HepG2 (cell line): ENCODE measurements at regions of chr16 and their contacts with region 1.

Region 1: GRCh38 chr16:30984669-30985400 is at the start of gene HSD3B7:
- DNase-seq: peak; percentile 80
- ATAC-seq: peak; percentile 78
- H3K4me3 ChIP-seq: peak within 1 kb of the TSS; percentile 41 to 72 (median 54)
- H3K27ac ChIP-seq: peak within 1 kb of the TSS; percentile 49
- H3K4me1 ChIP-seq: peaks cover 16% of the 10 kb centered on the region
- H3K27me3 ChIP-seq: no peaks in the 10 kb centered on the region
- CTCF ChIP-seq: peak; percentile 95
- EP300 ChIP-seq: 0 out of 4 replicates have a peak, but pooled peaks of 1 of the 2 experiments have one; percentile 21
- POLR2A ChIP-seq: peak; percentile 47 to 58; a peak in 3 of 4 replicates
- RAD21 ChIP-seq: peak; percentile 90
- total RNA-seq, gene HSD3B7: 58.8 and 69.7 TPM in 2 replicates

Region 2: GRCh38 chr16:31002250-31002700 is 17.4 kb after region 1 on chr16:
- CTCF ChIA-PET with region 1: interaction called, 3 read pairs
- POLR2A ChIA-PET with region 1: interaction called, 81 read pairs
- in situ Hi-C with region 1: no loop called
- intact Hi-C with region 1: no loop called
- DNase-seq: no peak
- ATAC-seq: peak; percentile 1
- H3K4me3 ChIP-seq: peak overlapping the region; percentile 8 to 73 (median 41)
- H3K27ac ChIP-seq: peak overlapping the region; percentile 50
- H3K4me1 ChIP-seq: peaks cover 95% of the 10 kb centered on the region
- H3K27me3 ChIP-seq: no peaks in the 10 kb centered on the region; a peak in 2 of 5 replicates
- CTCF ChIP-seq: peak; percentile 0; the same call in 1 of the 2 replicates
- EP300 ChIP-seq: no peak
- POLR2A ChIP-seq: no peak
- RAD21 ChIP-seq: no peak

Region 3: GRCh38 chr16:31032736-31033708 is 48.2 kb after region 1 on chr16 and contains the start of gene STX4:
- CTCF ChIA-PET with region 1: interaction called, 4 read pairs
- POLR2A ChIA-PET with region 1: interaction called, 10 read pairs
- in situ Hi-C with region 1: no loop called
- intact Hi-C with region 1: no loop called
- DNase-seq: peak; percentile 94
- ATAC-seq: peak; percentile 88
- H3K4me3 ChIP-seq: peak within 1 kb of the TSS; percentile 86 to 99 (median 94)
- H3K27ac ChIP-seq: peak within 1 kb of the TSS; percentile 82
- H3K4me1 ChIP-seq: peaks cover 39% of the 10 kb centered on the region
- H3K27me3 ChIP-seq: no peaks in the 10 kb centered on the region; a peak in 1 of 5 replicates
- CTCF ChIP-seq: peak; percentile 16; the same call in 1 of the 2 replicates
- EP300 ChIP-seq: no peak
- POLR2A ChIP-seq: peak; percentile 60 to 75; a peak in 2 of 4 replicates
- RAD21 ChIP-seq: no peak
- total RNA-seq, gene STX4: 29.2 and 31.3 TPM in 2 replicates

Region 4: DNA sequence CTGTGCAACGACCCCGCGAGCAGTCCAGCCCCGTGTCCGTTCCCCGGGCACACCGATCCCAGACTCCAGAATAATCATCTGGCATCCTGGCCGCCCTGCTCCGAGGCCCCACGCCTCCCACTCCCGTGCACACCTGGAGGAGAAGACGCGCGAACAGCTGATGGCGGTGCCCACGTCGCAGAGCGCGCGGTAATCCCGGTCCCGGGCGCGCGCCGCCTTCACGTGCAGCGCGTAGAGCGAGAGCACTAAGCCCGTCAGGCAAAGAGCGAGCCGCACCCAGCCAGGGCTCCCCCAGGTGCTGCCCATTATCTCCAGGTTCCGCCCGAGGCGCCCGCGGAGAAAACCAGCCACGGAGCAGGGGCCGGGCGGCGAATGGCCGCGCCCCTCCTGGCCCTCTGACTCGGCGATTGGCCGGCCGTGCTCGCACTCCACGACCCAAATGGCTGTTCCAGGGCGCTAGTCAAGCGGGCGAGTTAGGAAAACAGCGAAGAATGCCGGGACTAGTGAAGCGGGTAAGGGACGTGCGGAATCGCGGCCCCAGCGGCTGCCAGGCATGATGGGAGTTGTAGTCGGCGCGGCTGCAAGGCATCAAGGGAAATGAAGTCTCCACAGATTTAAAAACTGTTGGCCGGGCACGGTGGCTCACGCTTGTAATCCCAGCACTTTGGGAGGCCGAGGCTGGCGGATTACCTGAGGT is 109.7 kb after region 1 on chr16 and contains the start of gene VKORC1:
- CTCF ChIA-PET with region 1: interaction called, 25 read pairs
- POLR2A ChIA-PET with region 1: interaction called, 19 read pairs
- in situ Hi-C with region 1: no loop called
- intact Hi-C with region 1: loop called (anchors 1 kb)
- DNase-seq: peak; percentile 98
- ATAC-seq: peak; percentile 95
- H3K4me3 ChIP-seq: peak within 1 kb of the TSS; percentile 80 to 100 (median 82)
- H3K27ac ChIP-seq: peak within 1 kb of the TSS; percentile 84
- H3K4me1 ChIP-seq: peaks cover 27% of the 10 kb centered on the region
- H3K27me3 ChIP-seq: no peaks in the 10 kb centered on the region; a peak in 1 of 5 replicates
- CTCF ChIP-seq: peak; percentile 44
- EP300 ChIP-seq: peak in 1 of 2 experiments; percentile 44; a peak in 1 of 4 replicates
- POLR2A ChIP-seq: peak; percentile 84 to 90
- RAD21 ChIP-seq: peak; percentile 32; the same call in 1 of the 2 replicates
- total RNA-seq, gene VKORC1: 92.1 and 141 TPM in 2 replicates

Region 5: DNA sequence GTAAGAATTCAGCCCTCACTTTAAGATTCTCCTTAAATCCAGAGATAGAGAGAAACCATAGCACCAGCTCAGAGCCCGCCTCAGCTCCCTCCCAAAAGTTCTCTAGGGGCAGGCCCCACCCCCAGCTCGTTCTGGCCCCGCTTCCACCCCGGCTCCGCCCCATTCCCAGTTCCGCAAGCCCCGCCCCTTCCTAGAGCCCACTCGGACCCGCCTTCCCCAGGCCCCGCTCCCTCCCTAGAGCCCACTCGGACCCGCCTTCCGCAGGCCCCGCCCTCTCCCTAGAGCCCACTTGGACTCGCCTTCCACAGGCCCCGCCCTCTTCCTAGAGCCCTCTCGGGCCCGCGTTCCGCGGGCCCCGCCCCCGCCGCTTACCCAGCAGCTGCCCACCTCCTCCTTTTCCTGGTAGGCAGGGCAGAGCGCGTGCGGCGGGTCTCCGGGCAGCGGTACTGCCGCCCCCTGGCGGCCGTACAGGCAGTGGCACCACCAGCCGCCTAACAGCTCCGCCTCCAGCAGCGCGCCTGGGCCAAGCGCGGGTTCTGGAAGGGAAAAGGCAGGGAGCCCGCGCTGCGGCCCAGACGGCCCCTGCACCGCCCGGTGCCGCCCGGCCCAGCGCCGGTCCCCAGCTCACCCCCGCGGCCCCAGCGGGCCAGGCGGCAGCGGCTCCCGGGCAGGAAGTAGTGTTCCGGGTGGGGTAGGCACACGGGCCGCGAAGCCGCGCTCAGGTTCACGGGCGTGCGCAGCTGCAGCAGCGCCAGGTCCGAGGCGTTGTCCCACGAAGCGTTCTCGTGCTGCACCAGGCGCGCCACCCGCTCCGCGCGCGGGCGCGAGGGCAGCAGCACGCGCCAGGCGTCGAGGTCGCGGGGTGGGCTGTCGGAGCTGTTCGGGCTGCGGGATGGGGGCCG is 157.5 kb after region 1 on chr16:
- CTCF ChIA-PET with region 1: no interaction called
- POLR2A ChIA-PET with region 1: interaction called, 31 read pairs
- in situ Hi-C with region 1: no loop called
- intact Hi-C with region 1: loop called (anchors 1 kb)
- DNase-seq: peak; percentile 98
- ATAC-seq: peak; percentile 74
- H3K4me3 ChIP-seq: peak overlapping the region; percentile 39 to 77 (median 64)
- H3K27ac ChIP-seq: peak overlapping the region; percentile 80
- H3K4me1 ChIP-seq: peaks cover 65% of the 10 kb centered on the region
- H3K27me3 ChIP-seq: peaks cover 0 to 14% of the 10 kb centered on the region in 2 experiments; a peak in 3 of 5 replicates
- CTCF ChIP-seq: peak; percentile 98
- EP300 ChIP-seq: peak; percentile 26 to 27; a peak in 1 of 4 replicates
- POLR2A ChIP-seq: no peak
- RAD21 ChIP-seq: peak; percentile 99

Region 6: GRCh38 chr16:31202414-31203375 is 217.9 kb after region 1 on chr16 and contains the start of gene PYCARD:
- CTCF ChIA-PET with region 1: no interaction called
- POLR2A ChIA-PET with region 1: no interaction called
- in situ Hi-C with region 1: no loop called
- intact Hi-C with region 1: no loop called
- DNase-seq: no peak
- ATAC-seq: peak; percentile 23
- H3K4me3 ChIP-seq: peak within 1 kb of the TSS; percentile 61 to 77 (median 61)
- H3K27ac ChIP-seq: no peak within 1 kb of the TSS
- H3K4me1 ChIP-seq: peaks cover 57% of the 10 kb centered on the region
- H3K27me3 ChIP-seq: peaks cover 0 to 35% of the 10 kb centered on the region in 2 experiments; a peak in 4 of 5 replicates
- CTCF ChIP-seq: no peak
- EP300 ChIP-seq: no peak
- POLR2A ChIP-seq: peak in 1 of 2 experiments; percentile 38; a peak in 2 of 4 replicates
- RAD21 ChIP-seq: peak; percentile 19; the same call in 1 of the 2 replicates
- total RNA-seq, gene PYCARD: 4.4 and 4.8 TPM in 2 replicates

Region 7: GRCh38 chr16:31713071-31713944 is 728.5 kb after region 1 on chr16:
- CTCF ChIA-PET with region 1: no interaction called
- POLR2A ChIA-PET with region 1: no interaction called
- in situ Hi-C with region 1: loop called (anchors 25 kb)
- intact Hi-C with region 1: no loop called
- DNase-seq: peak; percentile 97
- ATAC-seq: peak; percentile 86
- H3K4me3 ChIP-seq: peak overlapping the region; percentile 74 to 99 (median 91)
- H3K27ac ChIP-seq: peak overlapping the region; percentile 95
- H3K4me1 ChIP-seq: peaks cover 42% of the 10 kb centered on the region
- H3K27me3 ChIP-seq: no peaks in the 10 kb centered on the region; a peak in 1 of 5 replicates
- CTCF ChIP-seq: peak; percentile 31
- EP300 ChIP-seq: no peak
- POLR2A ChIP-seq: peak; percentile 97 to 99
- RAD21 ChIP-seq: peak; percentile 48